ENCODE measurements at regions of chr1 and their contacts with region 1.

Region 1: DNA sequence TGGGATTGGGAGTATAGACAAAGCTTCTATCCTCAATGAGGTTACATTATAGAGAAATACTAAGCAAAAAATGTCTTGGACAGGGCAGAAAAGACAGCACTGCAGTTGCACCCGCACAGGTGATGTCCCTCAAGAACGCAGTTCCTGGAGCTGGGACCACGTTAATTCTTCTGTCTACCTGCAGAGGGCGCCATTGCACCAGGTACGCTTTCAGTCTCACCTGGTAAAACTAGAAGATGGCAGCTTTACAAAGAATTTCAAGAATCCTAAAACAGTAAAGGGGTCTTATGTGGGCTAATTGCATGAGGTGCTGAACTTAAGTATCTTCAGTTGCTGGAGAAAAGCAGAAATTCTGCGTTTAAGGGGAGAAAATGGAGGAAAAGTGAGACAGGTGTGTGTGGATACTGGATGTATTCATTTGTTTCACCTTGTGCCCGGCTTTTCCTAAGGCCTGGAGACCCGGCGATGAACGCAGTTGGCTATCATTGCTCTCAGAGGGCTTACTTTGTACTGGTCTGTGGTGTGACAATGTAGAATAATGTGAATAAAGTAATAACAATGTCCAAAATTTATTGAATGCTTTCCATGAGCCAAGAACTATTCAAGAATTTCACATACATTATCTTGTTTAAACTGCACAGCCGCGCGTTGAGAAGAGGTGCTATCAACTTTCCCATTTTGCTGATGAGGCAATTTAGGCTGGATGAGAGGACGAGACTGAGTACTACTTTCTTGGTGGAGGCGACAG is 276.3 kb upstream of the GREM2 start:
- DNase-seq: no peak
- ATAC-seq: peak; percentile 82
- H3K4me3 ChIP-seq: no peak overlapping the region
- H3K27ac ChIP-seq: no peak overlapping the region
- H3K4me1 ChIP-seq: no peaks in the 10 kb centered on the region
- H3K27me3 ChIP-seq: no peaks in the 10 kb centered on the region
- CTCF ChIP-seq: peak; percentile 73 to 76 (median 75)
- EP300 ChIP-seq: no peak
- POLR2A ChIP-seq: no peak
- RAD21 ChIP-seq: peak; percentile 82

Region 2: GRCh38 chr1:240946926-240947325 is 58.7 kb after region 1 on chr1:
- CTCF ChIA-PET with region 1: interaction called, 8 read pairs
- POLR2A ChIA-PET with region 1: no interaction called
- RAD21 ChIA-PET with region 1: interaction called, 6 read pairs
- SMC1A ChIA-PET with region 1: no interaction called
- in situ Hi-C with region 1: no loop called
- intact Hi-C with region 1: loop called (anchors 1 kb)
- DNase-seq: no peak
- ATAC-seq: peak; percentile 89
- H3K4me3 ChIP-seq: no peak overlapping the region
- H3K27ac ChIP-seq: no peak overlapping the region
- H3K4me1 ChIP-seq: no peaks in the 10 kb centered on the region
- H3K27me3 ChIP-seq: no peaks in the 10 kb centered on the region
- CTCF ChIP-seq: peak; percentile 26 to 53 (median 47); a peak in 3 of 6 replicates
- EP300 ChIP-seq: no peak
- POLR2A ChIP-seq: no peak
- RAD21 ChIP-seq: peak; percentile 51

Region 3: GRCh38 chr1:241077386-241078147 is 189.4 kb after region 1 on chr1:
- CTCF ChIA-PET with region 1: no interaction called
- POLR2A ChIA-PET with region 1: no interaction called
- RAD21 ChIA-PET with region 1: no interaction called
- SMC1A ChIA-PET with region 1: no interaction called
- in situ Hi-C with region 1: no loop called
- intact Hi-C with region 1: no loop called
- DNase-seq: no peak
- ATAC-seq: no peak
- H3K4me3 ChIP-seq: no peak overlapping the region
- H3K27ac ChIP-seq: no peak overlapping the region
- H3K4me1 ChIP-seq: no peaks in the 10 kb centered on the region
- H3K27me3 ChIP-seq: no peaks in the 10 kb centered on the region
- CTCF ChIP-seq: no peak
- EP300 ChIP-seq: no peak
- POLR2A ChIP-seq: no peak
- RAD21 ChIP-seq: no peak

Region 4: DNA sequence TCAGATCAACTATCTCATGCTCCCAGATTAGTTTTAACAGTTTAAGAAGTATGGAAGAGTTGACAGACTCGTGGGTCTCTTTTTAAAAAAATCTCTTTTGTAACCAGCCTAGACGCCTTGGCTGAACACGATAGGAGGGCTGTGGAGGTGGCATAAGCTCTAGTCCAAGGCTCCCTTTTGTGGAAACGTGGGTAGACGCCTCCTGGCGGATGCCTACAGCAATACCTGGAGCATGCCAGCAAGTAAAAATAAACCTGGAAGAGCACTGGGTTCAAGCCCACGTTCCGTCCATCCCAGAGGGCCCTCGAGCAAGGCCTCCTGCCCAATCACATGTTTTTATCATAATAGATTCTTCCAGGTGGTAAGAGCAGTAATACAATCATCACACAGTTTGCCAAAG is 380.9 kb after region 1 on chr1:
- CTCF ChIA-PET with region 1: interaction called, 4 read pairs
- POLR2A ChIA-PET with region 1: no interaction called
- RAD21 ChIA-PET with region 1: no interaction called
- SMC1A ChIA-PET with region 1: no interaction called
- in situ Hi-C with region 1: no loop called
- intact Hi-C with region 1: loop called (anchors 10 kb)
- DNase-seq: no peak
- ATAC-seq: peak; percentile 50
- H3K4me3 ChIP-seq: no peak overlapping the region
- H3K27ac ChIP-seq: no peak overlapping the region
- H3K4me1 ChIP-seq: no peaks in the 10 kb centered on the region
- H3K27me3 ChIP-seq: no peaks in the 10 kb centered on the region
- CTCF ChIP-seq: peak; percentile 17 to 39 (median 18); a peak in 2 of 6 replicates
- EP300 ChIP-seq: no peak
- POLR2A ChIP-seq: no peak
- RAD21 ChIP-seq: no peak

Region 5: DNA sequence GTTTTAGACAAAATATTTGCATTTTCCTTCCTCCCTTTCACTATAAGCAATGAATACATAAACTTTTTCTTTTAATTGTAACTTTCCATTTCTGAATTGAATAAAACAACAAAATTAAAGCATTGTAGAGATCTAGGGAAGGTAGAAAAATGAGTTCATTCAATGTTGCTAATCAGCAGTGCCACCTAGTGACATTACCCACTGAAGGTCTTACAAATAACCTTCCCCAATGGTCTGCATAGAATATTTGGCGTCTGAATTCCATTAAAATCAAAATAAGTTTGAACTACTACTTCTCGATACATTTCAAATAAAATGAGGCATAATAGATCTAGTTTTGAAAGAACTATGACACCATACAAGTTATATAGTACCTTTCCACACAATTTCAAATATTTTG is 611.7 kb after region 1 on chr1:
- CTCF ChIA-PET with region 1: interaction called, 3 read pairs
- POLR2A ChIA-PET with region 1: no interaction called
- RAD21 ChIA-PET with region 1: no interaction called
- SMC1A ChIA-PET with region 1: no interaction called
- in situ Hi-C with region 1: no loop called
- intact Hi-C with region 1: loop called (anchors 5 kb)
- DNase-seq: no peak
- ATAC-seq: 0 out of 3 replicates have a peak, but pooled peaks have one; percentile 41
- H3K4me3 ChIP-seq: no peak overlapping the region
- H3K27ac ChIP-seq: no peak overlapping the region
- H3K4me1 ChIP-seq: no peaks in the 10 kb centered on the region
- H3K27me3 ChIP-seq: no peaks in the 10 kb centered on the region
- CTCF ChIP-seq: peak in 2 of 3 experiments; percentile 27 to 55; a peak in 3 of 6 replicates
- EP300 ChIP-seq: no peak
- POLR2A ChIP-seq: no peak
- RAD21 ChIP-seq: peak; percentile 54

Measured in GM12878 (cell line).